SK-N-SH (cell line): ENCODE measurements at regions of chr17 and their contacts with region 1.

Region 1: DNA sequence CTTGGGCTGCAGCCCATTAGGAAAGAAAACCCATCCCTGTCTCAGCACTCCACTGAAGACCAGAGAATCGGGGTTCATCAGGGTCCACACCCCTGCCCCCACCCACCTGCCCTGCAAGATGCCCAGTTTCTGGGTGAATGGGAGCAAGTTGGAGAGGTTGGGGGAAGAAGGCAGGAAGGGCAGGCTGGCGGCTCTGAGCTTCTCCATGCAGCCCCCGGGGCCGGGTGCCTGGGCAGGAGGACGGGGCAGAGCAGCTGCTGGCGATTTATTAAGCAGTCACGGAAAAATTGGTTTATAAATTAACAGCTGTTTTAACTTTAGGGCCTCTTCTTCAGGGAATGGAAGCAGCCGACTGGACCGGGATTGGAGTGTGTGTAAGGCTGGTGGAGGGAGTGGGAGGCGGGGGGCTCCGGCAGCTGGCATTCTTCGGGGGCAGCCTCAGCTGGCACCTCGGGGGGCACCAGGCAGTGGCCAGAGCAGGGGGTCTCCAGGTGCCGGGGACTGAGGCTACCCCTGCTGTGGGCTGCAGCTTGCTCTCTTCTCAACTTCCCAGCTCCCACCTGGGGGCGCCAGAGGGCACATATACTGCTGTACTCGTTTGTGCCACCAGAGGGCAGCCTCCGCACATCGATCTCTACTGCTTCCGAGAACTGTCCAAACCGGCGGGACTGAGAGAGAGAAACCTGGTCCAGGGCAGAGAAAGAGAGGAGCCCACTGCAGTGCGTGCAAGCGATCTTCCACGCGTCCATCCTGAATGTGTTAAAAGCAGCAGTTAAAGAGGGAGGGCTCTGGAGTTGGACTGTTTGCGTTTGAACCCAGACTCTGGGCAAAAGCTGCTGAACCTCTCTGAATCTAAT is 5.0 kb upstream of the PPP1R1B start:
- DNase-seq: peak; percentile 88
- H3K4me3 ChIP-seq: peak overlapping the region in 1 of 2 experiments; percentile 51; a peak in 2 of 4 replicates
- H3K27ac ChIP-seq: no peak overlapping the region
- H3K4me1 ChIP-seq: peaks cover 0 to 15% of the 10 kb centered on the region in 2 experiments; a peak in 1 of 4 replicates
- H3K27me3 ChIP-seq: peaks cover 6% of the 10 kb centered on the region
- CTCF ChIP-seq: peak; percentile 99
- EP300 ChIP-seq: no peak
- RAD21 ChIP-seq: peak; percentile 86

Region 2: DNA sequence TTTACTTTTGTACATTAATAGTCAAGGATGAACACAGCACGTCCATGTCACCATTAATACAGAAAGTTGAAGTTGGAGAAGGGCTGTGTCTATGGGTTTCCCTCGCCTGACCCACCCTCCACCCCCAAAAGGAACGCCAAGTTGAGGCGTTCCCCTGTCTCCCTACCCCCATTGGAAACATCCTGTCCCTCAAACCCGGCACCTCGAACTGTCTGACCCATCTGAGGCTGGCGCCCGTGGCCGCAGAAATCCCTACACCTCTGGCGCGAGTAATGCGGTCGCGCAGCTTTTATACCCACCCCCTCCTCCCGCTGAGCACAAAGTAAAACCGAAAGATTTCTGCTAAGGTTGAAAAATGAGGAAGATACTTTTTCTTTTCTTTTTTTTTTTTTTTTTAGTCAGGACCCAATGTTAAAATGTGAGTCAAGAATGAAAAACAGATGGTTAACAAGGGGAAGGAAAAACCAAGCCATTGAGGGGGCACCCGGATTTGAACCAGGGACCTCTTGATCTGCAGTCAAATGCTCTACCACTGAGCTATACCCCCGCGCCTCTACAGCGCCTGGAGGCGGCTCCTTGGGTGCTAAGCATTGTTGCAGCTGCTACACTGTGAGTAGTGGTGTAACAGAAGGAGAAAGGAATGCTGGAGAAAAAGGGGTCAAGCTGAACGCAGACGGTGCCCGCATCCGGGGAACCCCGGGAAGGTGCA is 752.8 kb before region 1 on chr17:
- CTCF ChIA-PET with region 1: no interaction called
- POLR2A ChIA-PET with region 1: no interaction called
- DNase-seq: peak; percentile 64
- H3K4me3 ChIP-seq: peak overlapping the region; percentile 94 to 97
- H3K27ac ChIP-seq: peak overlapping the region; percentile 89 to 96
- H3K4me1 ChIP-seq: peaks cover 19 to 28% of the 10 kb centered on the region in 2 experiments; a peak in 3 of 4 replicates
- H3K27me3 ChIP-seq: no peaks in the 10 kb centered on the region
- CTCF ChIP-seq: peak; percentile 52
- EP300 ChIP-seq: peak in 1 of 2 experiments; percentile 11; a peak in 2 of 4 replicates
- RAD21 ChIP-seq: 0 out of 2 replicates have a peak, but pooled peaks have one; percentile 0

Region 3: GRCh38 chr17:39547713-39548478 is 73.9 kb before region 1 on chr17:
- CTCF ChIA-PET with region 1: interaction called, 483 read pairs
- POLR2A ChIA-PET with region 1: no interaction called
- DNase-seq: peak; percentile 76
- H3K4me3 ChIP-seq: no peak overlapping the region; a peak in 1 of 4 replicates
- H3K27ac ChIP-seq: no peak overlapping the region
- H3K4me1 ChIP-seq: peaks cover 8 to 9% of the 10 kb centered on the region in 2 experiments; a peak in 1 of 4 replicates
- H3K27me3 ChIP-seq: no peaks in the 10 kb centered on the region
- CTCF ChIP-seq: peak; percentile 98
- EP300 ChIP-seq: no peak
- RAD21 ChIP-seq: peak; percentile 82

Region 4: DNA sequence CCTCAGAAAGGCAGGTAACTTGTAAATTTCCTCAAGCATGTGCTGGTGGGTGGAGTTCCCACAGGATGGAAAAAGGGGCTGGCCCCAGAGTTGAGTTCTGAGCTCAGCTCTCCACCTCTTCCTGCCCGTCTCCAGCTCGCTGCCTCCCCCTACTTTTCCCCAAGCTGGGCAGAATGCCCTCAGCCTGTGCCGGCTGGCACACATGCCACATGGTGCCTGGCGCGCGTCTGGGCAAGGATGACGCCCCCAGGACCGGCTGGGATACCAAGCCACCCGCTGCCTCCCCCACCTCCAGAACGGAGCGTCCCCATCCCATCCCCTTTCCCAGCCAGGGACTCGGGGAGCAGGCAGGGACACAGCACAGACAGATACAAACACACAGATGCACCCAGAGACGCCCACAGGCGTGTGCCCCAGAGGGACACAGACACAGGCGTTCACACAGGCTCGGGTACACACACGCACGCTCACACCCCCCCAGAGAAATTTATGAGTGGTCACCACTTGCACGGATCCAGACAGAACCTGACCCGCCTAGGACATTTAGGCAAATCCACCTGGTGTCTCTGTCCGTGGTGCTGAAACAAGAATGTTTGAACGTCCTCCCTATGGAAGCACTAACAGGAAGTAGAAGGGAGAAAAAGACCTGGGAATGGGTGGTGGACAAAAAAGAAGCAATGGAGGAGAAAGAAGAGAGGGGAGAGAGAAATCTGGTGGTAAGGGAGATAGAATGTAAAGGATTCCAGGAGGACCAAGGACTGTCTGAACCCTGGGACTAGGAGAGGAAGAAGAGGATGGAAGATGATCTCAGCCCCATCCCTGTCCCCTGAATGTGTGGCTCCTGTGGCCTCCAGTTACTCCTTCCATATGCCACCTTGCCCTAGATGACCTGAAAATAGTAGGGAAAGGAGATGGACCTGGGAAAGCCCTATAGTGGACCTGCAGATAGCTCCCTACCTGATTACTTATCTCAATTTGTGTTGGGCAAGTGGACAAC is 29.5 kb before region 1 on chr17:
- CTCF ChIA-PET with region 1: interaction called, 285 read pairs
- POLR2A ChIA-PET with region 1: no interaction called
- DNase-seq: peak; percentile 62
- H3K4me3 ChIP-seq: no peak overlapping the region
- H3K27ac ChIP-seq: no peak overlapping the region
- H3K4me1 ChIP-seq: peaks cover 0 to 5% of the 10 kb centered on the region in 2 experiments; a peak in 1 of 4 replicates
- H3K27me3 ChIP-seq: peaks cover 28% of the 10 kb centered on the region
- CTCF ChIP-seq: no peak
- EP300 ChIP-seq: no peak
- RAD21 ChIP-seq: no peak

Region 5: GRCh38 chr17:39662551-39663339 is 41.0 kb after region 1 on chr17:
- CTCF ChIA-PET with region 1: interaction called, 279 read pairs
- POLR2A ChIA-PET with region 1: no interaction called
- DNase-seq: no peak
- H3K4me3 ChIP-seq: no peak overlapping the region
- H3K27ac ChIP-seq: no peak overlapping the region
- H3K4me1 ChIP-seq: peaks cover 0 to 10% of the 10 kb centered on the region in 2 experiments; a peak in 1 of 4 replicates
- H3K27me3 ChIP-seq: no peaks in the 10 kb centered on the region
- CTCF ChIP-seq: no peak
- EP300 ChIP-seq: no peak
- RAD21 ChIP-seq: no peak

Region 6: DNA sequence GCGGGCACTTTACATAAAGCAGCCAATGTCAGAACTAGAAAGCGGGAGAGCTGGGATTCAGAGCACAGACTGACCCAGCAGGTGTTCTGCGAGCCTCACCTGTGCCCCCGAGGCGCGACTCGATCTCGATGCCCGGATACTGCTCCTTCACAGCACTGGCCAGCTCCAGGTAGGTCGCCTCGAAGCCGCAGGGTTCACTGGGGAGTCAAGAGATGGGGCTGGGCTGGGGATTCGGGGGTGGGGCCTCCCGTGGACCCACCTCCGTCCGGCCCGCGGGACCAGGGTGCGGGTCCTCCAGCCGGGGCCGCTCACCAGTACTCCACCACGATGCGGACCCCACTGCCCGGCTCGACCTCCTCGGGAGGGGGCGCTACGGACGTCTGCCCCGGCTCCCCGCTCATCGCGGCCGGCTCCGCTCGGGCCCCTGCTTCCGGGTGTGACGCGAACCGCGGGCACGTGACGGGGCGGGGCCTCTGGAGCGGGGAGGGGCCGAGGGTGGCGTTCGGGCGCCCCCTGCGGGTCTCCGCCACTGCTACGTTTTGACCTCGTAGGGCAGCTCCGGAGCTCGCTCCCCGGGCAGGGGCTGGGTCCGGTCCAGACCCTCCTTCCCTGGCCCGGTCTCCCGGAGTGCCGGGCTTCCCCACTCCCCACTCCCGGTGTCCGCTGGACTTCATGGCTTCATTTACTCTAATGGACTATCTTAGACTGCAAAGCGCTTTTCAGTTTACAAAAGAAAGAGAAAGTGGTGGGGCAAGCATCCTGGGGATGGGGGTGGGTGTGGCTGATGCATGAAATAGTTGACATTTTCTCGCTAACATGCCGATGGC is 108.6 kb after region 1 on chr17 and contains the start of gene MIEN1:
- CTCF ChIA-PET with region 1: interaction called, 27 read pairs
- POLR2A ChIA-PET with region 1: no interaction called
- DNase-seq: peak; percentile 99
- H3K4me3 ChIP-seq: peak within 1 kb of the TSS; percentile 65 to 96
- H3K27ac ChIP-seq: peak within 1 kb of the TSS; percentile 65 to 76; a peak in 3 of 4 replicates
- H3K4me1 ChIP-seq: peaks cover 0 to 8% of the 10 kb centered on the region in 2 experiments; a peak in 1 of 4 replicates
- H3K27me3 ChIP-seq: no peaks in the 10 kb centered on the region
- CTCF ChIP-seq: peak; percentile 76
- EP300 ChIP-seq: no peak
- RAD21 ChIP-seq: peak; percentile 43
- polyA plus RNA-seq, gene MIEN1: 100 and 105 TPM in 2 replicates